Activated T-helper 1 cell treated with anti-CD3 and anti-CD28 coated beads, Interleukin-12 subunit alpha, Interleukin-12 subunit beta, Interleukin-2, Interleukin-4 antibody, amounts not matched to agents 30 ng/mL and 10 ng/mL and 1 ng/mL, durations not matched to agents 14 hours and 24 hours and 36 hours (primary cell): ENCODE measurements at regions of chr14 and their contacts with region 1.

Region 1: DNA sequence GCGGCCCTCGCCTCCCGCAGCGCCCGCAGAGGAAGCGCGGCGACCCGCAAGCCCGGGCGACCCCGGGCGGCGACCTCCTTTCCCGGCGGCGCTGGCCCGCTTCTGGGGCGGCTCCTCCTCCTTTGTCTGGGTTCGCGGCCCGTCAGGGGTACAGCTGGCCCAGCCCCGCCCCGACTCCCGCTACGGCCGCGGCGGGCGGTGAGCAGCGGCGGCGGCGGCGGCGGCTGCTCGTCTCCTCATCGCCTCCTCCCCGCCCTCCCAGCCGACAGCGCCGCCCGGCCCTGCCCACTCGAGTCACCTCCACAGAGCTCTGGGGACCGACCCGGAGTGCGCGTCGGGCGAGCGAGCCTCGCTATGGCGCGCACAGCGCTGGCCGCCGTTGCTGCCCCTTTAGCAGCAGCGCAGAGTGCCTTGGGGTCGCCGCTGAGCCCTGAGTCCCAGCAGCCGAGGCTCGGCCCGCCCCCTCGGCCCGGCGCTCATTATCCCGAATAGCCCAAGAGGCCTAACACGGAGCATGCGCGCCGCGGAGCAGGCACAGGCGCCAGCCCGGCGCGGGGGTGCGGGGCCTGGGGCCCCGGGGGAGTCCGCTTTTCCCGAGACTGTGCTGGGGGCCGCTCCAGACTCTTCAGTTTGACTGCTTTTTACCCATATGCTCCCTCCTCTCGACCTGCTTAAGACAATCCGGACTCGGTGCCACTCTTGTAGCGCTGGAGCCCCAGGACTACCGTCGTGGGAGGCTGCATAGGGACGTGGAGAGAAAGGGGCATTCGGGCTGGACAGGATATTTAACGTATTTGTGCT is at the start of gene SOS2:
- DNase-seq: peak; percentile 82
- H3K4me3 Mint-ChIP-seq: peak within 1 kb of the TSS; percentile 86
- H3K27ac Mint-ChIP-seq: peak within 1 kb of the TSS; percentile 89
- H3K4me1 Mint-ChIP-seq: peaks cover 44% of the 10 kb centered on the region
- H3K27me3 Mint-ChIP-seq: no peaks in the 10 kb centered on the region
- total RNA-seq, gene SOS2: 19.9 and 21.6 TPM in 2 replicates

Region 2: DNA sequence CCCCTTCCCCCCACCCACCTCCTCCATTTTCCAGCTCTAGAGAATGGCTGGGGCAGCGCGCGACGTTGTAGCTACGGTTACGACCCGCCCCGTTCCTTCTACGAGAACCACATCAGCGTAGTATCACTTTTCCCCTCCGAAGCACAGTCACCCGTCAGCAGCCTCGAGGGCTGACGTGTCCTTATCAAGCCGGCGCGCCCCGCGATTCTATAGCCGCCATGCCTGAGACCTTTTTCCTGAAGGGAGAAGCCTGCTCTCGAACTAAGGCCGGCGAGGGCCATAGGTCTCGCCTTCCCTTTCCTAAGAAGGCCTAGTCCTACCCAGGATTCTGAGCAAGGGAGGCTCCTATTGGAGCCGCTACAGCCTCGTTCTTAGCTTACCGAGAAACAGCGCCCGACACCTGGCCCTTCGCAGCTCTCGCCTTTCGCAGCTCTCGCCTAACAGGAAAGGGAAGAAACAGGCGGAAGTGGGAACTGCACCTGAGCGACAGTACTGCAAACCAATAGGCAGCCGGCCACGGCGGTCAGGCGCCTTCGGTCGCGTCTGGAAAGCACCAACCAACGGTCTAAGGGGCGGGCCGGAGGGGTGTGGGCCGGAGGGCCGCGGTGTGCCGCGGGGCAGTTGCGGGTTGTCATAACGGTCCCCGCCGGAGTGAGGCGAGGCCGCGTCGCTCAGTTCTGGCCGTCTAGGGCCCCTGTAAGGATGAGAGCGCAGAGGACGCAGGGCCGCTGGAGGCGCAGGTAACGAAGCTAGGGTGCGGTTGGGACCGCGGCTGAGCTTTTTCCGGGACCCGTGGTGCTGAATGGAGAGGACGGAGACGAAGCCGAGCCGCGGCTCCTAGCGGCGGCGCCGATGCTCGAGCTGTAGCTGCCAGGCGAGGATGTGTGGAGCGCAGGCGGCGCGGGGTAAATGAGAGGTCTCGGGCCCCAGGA is 611.2 kb before region 1 on chr14 and contains the starts of genes MGAT2 and RPL36AL:
- intact Hi-C with region 1: loop called (anchors 5 kb)
- DNase-seq: peak; percentile 96
- H3K4me3 Mint-ChIP-seq: peak within 1 kb of the TSS; percentile 98
- H3K27ac Mint-ChIP-seq: peak within 1 kb of the TSS; percentile 98
- H3K4me1 Mint-ChIP-seq: peaks cover 53% of the 10 kb centered on the region
- H3K27me3 Mint-ChIP-seq: peaks cover 2% of the 10 kb centered on the region
- total RNA-seq, gene MGAT2: 57.5 and 58.3 TPM in 2 replicates
- total RNA-seq, gene RPL36AL: 224 and 237 TPM in 2 replicates

Region 3: DNA sequence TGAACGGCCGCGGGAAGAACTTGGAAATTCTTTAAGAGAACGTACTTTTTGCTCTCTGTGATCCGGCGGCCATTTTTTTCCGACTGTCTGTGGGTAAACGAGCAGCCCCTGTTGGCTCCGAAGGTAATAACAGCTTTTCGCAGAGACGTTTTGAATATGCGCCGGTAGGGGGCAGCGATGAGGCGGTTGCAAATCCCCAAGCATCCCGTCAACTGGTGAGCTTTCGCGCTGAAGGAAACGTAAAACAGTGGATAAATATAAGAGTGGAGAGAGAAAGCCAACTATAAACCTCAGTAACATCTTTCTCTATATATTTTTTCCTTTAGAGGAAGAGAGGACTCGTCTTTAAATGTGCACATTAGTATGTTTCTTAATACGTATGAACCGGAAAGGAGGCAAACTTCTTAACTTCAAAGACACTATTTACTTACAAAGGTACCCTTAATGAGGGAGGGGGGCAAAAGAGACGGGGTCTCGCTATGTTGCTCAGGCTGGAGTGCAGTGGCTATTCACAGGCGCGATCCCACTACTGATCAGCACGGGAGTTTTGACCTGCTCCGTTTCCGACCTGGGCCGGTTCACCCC is 369.5 kb before region 1 on chr14:
- intact Hi-C with region 1: loop called (anchors 2 kb)
- DNase-seq: peak; percentile 81
- H3K4me3 Mint-ChIP-seq: no peak overlapping the region
- H3K27ac Mint-ChIP-seq: no peak overlapping the region
- H3K4me1 Mint-ChIP-seq: peaks cover 10% of the 10 kb centered on the region
- H3K27me3 Mint-ChIP-seq: peaks cover 6% of the 10 kb centered on the region

Region 4: GRCh38 chr14:50038398-50039119 is 193.1 kb before region 1 on chr14:
- intact Hi-C with region 1: loop called (anchors 1 kb)
- DNase-seq: peak; percentile 71
- H3K4me3 Mint-ChIP-seq: peak overlapping the region; percentile 78
- H3K27ac Mint-ChIP-seq: peak overlapping the region; percentile 98
- H3K4me1 Mint-ChIP-seq: peaks cover 79% of the 10 kb centered on the region
- H3K27me3 Mint-ChIP-seq: no peaks in the 10 kb centered on the region

Region 5: DNA sequence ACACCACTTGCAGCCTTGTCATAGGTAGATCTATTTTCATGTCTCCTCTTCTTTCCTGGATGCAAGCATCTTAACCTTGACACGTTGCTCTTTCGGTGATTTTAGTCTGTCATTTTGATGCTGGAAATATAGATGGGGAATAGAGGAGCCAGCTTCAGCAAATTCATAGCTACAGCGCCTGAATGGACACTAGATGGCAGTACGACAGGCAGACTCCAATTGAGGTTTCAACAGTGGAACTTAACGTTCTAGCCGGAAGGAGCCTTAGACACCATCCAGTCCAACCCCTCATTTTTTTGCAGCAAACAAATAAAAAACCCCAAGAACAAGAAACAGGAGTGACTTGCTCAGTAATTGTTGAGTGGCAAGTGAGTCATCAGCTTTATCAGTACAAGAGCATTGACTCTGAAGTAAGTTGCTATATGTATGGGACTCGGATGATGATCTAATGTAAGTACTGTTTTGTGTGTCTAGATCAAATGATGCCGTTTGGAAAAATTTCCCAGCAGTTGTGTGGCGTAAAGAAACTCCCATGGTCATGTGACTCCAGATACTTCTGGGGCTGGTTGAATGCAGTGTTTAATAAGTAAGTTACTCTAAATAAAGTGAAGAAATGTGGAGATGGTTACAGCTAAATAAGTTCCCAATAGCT is 89.5 kb after region 1 on chr14:
- intact Hi-C with region 1: loop called (anchors 1 kb)
- DNase-seq: peak; percentile 68
- H3K4me3 Mint-ChIP-seq: no peak overlapping the region
- H3K27ac Mint-ChIP-seq: no peak overlapping the region
- H3K4me1 Mint-ChIP-seq: peaks cover 20% of the 10 kb centered on the region
- H3K27me3 Mint-ChIP-seq: no peaks in the 10 kb centered on the region

Region 6: GRCh38 chr14:50823051-50823761 is 591.5 kb after region 1 on chr14:
- intact Hi-C with region 1: loop called (anchors 5 kb)
- DNase-seq: no peak
- H3K4me3 Mint-ChIP-seq: peak overlapping the region; percentile 61
- H3K27ac Mint-ChIP-seq: peak overlapping the region; percentile 74
- H3K4me1 Mint-ChIP-seq: peaks cover 81% of the 10 kb centered on the region
- H3K27me3 Mint-ChIP-seq: peaks cover 2% of the 10 kb centered on the region

Region 7: GRCh38 chr14:51638071-51638944 is 1406.6 kb after region 1 on chr14:
- intact Hi-C with region 1: no loop called
- DNase-seq: no peak
- H3K4me3 Mint-ChIP-seq: no peak overlapping the region
- H3K27ac Mint-ChIP-seq: no peak overlapping the region
- H3K4me1 Mint-ChIP-seq: no peaks in the 10 kb centered on the region
- H3K27me3 Mint-ChIP-seq: peaks cover 14% of the 10 kb centered on the region